AG04450 (cell line): ENCODE measurements at regions of chr16 and their contacts with region 1.

Region 1: DNA sequence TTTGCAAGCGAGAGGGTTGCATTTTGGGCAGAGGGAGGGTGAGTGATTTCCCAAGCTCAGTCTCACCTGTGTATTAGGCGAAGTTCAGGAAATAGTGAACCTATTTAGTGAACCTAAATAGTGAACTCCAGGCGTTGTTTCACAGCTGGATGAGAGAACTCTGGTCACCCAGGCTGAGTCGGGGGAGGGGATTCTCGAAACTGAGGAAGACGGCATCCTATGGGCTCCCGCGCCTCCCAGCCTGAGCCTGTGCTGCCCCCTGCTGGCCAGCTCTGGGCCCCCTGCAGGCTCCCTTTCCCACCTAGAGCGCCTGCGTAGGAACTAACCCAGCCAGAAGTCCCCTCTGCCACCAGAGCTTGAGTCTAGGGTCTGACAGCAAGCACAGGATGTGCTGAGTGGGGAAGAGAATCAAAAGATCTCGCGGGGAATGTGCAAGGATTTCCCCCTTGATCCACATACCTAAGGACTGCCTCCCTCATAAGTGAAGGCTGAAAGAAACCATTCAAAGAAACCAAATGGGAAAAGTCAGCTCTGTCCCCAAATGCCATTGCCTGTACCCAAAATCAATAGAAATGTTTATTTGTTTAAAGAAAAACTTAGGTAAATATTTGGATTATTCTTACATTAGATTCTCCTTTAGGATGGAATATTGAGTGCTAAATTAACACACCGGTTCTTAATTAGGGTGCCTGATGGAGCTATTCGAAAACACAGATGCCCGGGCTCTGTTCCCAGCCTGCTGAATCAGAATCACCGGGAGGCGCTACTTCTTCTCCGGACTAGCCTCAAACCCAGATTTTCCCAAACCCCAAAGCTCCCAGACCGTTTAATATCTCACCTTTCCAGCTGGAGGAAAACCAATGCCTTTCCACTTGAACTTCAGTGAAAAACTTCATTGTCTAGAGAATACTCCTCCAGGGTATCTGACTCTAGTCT is 14.8 kb upstream of the MARVELD3 start:
- DNase-seq: no peak
- H3K4me3 ChIP-seq: no peak overlapping the region
- H3K27ac ChIP-seq: no peak overlapping the region
- H3K27me3 ChIP-seq: peaks cover 3% of the 10 kb centered on the region
- CTCF ChIP-seq: peak; percentile 82

Region 2: DNA sequence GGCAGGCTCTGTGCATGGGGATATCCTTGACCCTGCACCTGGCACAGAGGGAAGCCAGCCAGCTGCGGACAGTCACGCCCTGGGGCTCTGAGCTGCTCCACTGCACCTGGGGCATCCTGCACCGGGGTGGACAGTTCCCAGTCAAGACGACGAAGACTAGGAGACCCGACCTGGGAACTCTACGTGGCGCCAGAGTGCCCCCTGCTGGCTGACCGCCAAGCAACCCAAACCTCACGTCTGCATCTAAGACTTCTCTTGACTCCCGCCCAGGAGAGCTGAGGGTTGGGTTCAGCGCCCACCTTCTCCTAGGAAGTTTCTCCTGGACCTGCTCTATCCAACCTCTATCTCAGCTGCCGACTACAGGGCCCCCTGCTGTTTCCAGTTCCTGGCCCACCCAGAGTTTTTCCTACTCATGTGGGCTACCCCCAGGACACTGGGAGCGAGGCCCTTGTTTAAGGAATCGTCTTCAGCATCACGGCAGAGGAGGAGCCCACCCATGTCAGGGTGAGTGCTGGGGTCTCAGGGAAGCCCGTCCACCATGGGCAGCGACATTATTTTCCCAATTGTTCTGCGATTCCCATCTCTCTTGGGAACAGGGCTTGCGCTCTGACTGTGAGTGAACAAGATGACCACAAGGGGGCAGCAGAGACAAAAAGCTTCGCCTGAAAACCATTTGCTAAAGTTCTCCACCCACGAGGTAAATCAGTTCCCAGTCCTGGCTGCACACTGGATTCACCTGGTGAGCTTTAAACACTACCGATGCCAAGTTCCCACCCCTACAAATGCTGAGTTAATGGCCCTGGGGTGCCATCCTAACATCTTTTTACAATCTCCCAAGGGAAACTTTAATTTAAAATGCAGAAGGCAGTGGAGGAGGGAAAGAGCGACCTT is 198.7 kb before region 1 on chr16:
- CTCF ChIA-PET with region 1: interaction called, 15 read pairs
- POLR2A ChIA-PET with region 1: no interaction called
- DNase-seq: peak; percentile 34
- H3K4me3 ChIP-seq: no peak overlapping the region
- H3K27ac ChIP-seq: no peak overlapping the region
- H3K27me3 ChIP-seq: peaks cover 21% of the 10 kb centered on the region
- CTCF ChIP-seq: peak; percentile 83

Region 3: DNA sequence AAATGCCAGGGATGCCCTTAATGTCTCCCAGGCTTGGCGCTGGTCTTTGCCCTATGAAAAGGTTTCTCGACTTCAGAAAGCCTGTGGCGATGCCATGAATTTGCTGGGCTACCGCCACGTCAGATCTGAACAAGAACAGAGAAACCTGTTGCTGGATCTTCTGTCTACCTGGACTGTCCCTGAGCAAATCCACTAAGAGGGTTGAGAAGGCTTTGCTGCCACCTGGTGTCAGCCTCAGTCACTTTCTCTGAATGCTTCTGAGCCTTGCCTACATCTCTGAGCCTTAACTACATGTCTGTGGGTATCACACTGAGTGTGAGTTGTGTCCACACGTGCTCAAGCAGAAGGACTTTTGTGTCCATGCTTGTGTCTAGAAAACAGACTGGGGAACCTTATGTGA is 73.6 kb before region 1 on chr16:
- CTCF ChIA-PET with region 1: interaction called, 11 read pairs
- POLR2A ChIA-PET with region 1: no interaction called
- DNase-seq: peak; percentile 8
- H3K4me3 ChIP-seq: no peak overlapping the region
- H3K27ac ChIP-seq: no peak overlapping the region
- H3K27me3 ChIP-seq: no peaks in the 10 kb centered on the region
- CTCF ChIP-seq: peak; percentile 65

Region 4: DNA sequence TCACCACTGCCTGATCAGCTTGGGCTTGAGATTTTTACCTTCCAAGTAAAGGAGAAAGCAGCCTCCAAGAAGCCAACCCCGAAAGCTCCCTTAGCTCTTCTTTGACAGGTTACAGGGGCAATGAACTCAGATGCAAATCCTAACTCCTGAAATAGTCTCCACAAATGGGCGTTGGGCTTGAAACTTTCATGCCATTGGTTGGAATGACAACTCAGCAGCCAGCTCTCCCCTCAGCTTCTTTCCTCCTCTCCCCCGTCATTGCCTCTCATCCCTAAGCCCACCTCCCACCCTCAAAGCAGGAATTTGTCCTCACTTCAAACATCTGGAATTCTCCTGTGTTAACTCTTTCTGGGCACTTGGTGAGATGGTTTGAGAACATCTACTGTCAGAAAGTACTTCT is 34.2 kb before region 1 on chr16 and contains the start of gene TAT:
- CTCF ChIA-PET with region 1: interaction called, 10 read pairs
- POLR2A ChIA-PET with region 1: no interaction called
- DNase-seq: no peak
- H3K4me3 ChIP-seq: no peak within 1 kb of the TSS
- H3K27ac ChIP-seq: no peak within 1 kb of the TSS
- H3K27me3 ChIP-seq: no peaks in the 10 kb centered on the region
- CTCF ChIP-seq: no peak
- polyA plus RNA-seq, gene TAT: not detected in 2 replicates

Region 5: GRCh38 chr16:71594000-71594646 is 17.1 kb before region 1 on chr16:
- CTCF ChIA-PET with region 1: interaction called, 12 read pairs
- POLR2A ChIA-PET with region 1: no interaction called
- DNase-seq: no peak
- H3K4me3 ChIP-seq: no peak overlapping the region
- H3K27ac ChIP-seq: no peak overlapping the region
- H3K27me3 ChIP-seq: peaks cover 2% of the 10 kb centered on the region
- CTCF ChIP-seq: no peak

Region 6: DNA sequence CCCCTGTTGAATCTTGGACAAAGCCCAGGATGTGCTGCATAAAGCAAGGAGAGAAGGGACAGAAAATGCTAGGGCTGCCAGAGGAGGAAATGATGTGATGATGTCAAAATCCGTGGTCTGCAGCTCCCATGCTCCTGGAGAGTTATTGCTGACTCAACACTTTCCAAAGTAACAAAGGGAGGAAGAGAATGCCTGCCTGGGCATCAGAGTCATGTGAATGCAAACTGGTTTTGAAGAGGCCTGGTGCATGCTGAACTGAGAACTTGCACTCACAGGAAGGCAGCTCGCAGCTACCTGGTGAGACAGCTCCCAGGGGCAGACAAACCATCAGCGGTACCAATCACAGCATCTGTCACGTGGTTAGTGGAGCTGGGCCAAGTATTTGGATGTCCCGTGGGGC is 17.6 kb after region 1 on chr16:
- CTCF ChIA-PET with region 1: interaction called, 21 read pairs
- POLR2A ChIA-PET with region 1: no interaction called
- DNase-seq: no peak
- H3K4me3 ChIP-seq: no peak overlapping the region
- H3K27ac ChIP-seq: no peak overlapping the region
- H3K27me3 ChIP-seq: peaks cover 33% of the 10 kb centered on the region
- CTCF ChIP-seq: no peak

Region 7: GRCh38 chr16:71693164-71693563 is 82.0 kb after region 1 on chr16:
- CTCF ChIA-PET with region 1: no interaction called
- POLR2A ChIA-PET with region 1: no interaction called
- DNase-seq: no peak
- H3K4me3 ChIP-seq: no peak overlapping the region
- H3K27ac ChIP-seq: no peak overlapping the region
- H3K27me3 ChIP-seq: no peaks in the 10 kb centered on the region
- CTCF ChIP-seq: no peak